IMR-90 (cell line): ENCODE measurements at regions of chr11 and their contacts with region 1.

Region 1: GRCh38 chr11:95923728-95924413 is at the start of gene MTMR2:
- DNase-seq: peak; percentile 70
- ATAC-seq: peak; percentile 98
- H3K4me3 ChIP-seq: peak within 1 kb of the TSS; percentile 86
- H3K27ac ChIP-seq: peak within 1 kb of the TSS; percentile 99
- H3K4me1 ChIP-seq: 0 out of 2 replicates have a peak, but pooled peaks cover 1% of the 10 kb centered on the region
- H3K27me3 ChIP-seq: no peaks in the 10 kb centered on the region
- CTCF ChIP-seq: no peak
- POLR2A ChIP-seq: peak; percentile 96
- RAD21 ChIP-seq: no peak
- total RNA-seq, gene MTMR2: 30.6 and 36.9 TPM in 2 replicates

Region 2: GRCh38 chr11:95790123-95790932 is 133.5 kb before region 1 on chr11 and contains the start of gene CEP57:
- CTCF ChIA-PET with region 1: no interaction called
- POLR2A ChIA-PET with region 1: no interaction called
- dilution Hi-C with region 1: no loop called
- in situ Hi-C with region 1: no loop called
- intact Hi-C with region 1: loop called (anchors 2 kb)
- DNase-seq: peak; percentile 99
- ATAC-seq: peak; percentile 76
- H3K4me3 ChIP-seq: peak within 1 kb of the TSS; percentile 78
- H3K27ac ChIP-seq: peak within 1 kb of the TSS; percentile 85
- H3K4me1 ChIP-seq: no peaks in the 10 kb centered on the region
- H3K27me3 ChIP-seq: no peaks in the 10 kb centered on the region
- CTCF ChIP-seq: no peak
- POLR2A ChIP-seq: peak; percentile 58
- RAD21 ChIP-seq: no peak
- total RNA-seq, gene CEP57: 30.5 and 38.0 TPM in 2 replicates

Region 3: GRCh38 chr11:95835768-95836488 is 87.9 kb before region 1 on chr11:
- CTCF ChIA-PET with region 1: no interaction called
- POLR2A ChIA-PET with region 1: no interaction called
- dilution Hi-C with region 1: no loop called
- in situ Hi-C with region 1: no loop called
- intact Hi-C with region 1: loop called (anchors 2 kb)
- DNase-seq: peak; percentile 96
- ATAC-seq: peak; percentile 84
- H3K4me3 ChIP-seq: no peak overlapping the region
- H3K27ac ChIP-seq: no peak overlapping the region
- H3K4me1 ChIP-seq: peaks cover 12% of the 10 kb centered on the region
- H3K27me3 ChIP-seq: no peaks in the 10 kb centered on the region
- CTCF ChIP-seq: peak; percentile 97
- POLR2A ChIP-seq: no peak
- RAD21 ChIP-seq: peak; percentile 95

Region 4: GRCh38 chr11:95877291-95877690 is 46.6 kb before region 1 on chr11:
- CTCF ChIA-PET with region 1: no interaction called
- POLR2A ChIA-PET with region 1: no interaction called
- dilution Hi-C with region 1: no loop called
- in situ Hi-C with region 1: no loop called
- intact Hi-C with region 1: loop called (anchors 5 kb)
- DNase-seq: peak; percentile 100
- ATAC-seq: peak; percentile 99
- H3K4me3 ChIP-seq: no peak overlapping the region
- H3K27ac ChIP-seq: peak overlapping the region; percentile 92
- H3K4me1 ChIP-seq: peaks cover 7% of the 10 kb centered on the region; the same call in 1 of the 2 replicates
- H3K27me3 ChIP-seq: no peaks in the 10 kb centered on the region
- CTCF ChIP-seq: no peak
- POLR2A ChIP-seq: no peak
- RAD21 ChIP-seq: 0 out of 2 replicates have a peak, but pooled peaks have one; percentile 1

Region 5: GRCh38 chr11:96054870-96055705 is 131.2 kb after region 1 on chr11:
- CTCF ChIA-PET with region 1: no interaction called
- POLR2A ChIA-PET with region 1: no interaction called
- dilution Hi-C with region 1: no loop called
- in situ Hi-C with region 1: no loop called
- intact Hi-C with region 1: loop called (anchors 5 kb)
- DNase-seq: peak; percentile 64
- ATAC-seq: no peak
- H3K4me3 ChIP-seq: no peak overlapping the region
- H3K27ac ChIP-seq: 0 out of 2 replicates have a peak overlapping the region, but pooled peaks have one; percentile 37
- H3K4me1 ChIP-seq: peaks cover 33% of the 10 kb centered on the region
- H3K27me3 ChIP-seq: no peaks in the 10 kb centered on the region
- CTCF ChIP-seq: peak; percentile 63
- POLR2A ChIP-seq: no peak
- RAD21 ChIP-seq: peak; percentile 64

Region 6: DNA sequence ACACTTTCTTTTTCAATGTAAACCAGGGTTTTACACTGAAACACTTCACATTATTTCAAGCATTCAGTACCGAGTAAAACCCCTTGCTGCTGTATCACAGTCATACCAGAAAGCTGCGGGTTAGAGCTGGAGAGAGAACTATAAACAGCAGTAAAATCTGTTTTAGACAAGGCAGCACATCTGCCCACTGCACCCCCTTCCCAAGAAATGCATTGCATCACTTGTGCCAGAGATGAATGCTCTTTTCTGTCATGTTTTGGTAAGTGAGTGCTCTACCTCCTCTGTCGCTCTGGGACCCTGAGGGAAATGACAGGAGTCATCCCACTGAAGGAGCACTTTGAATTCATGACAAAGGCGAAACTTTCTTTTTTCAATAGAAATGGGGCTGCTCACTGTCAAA is 311.9 kb after region 1 on chr11:
- CTCF ChIA-PET with region 1: no interaction called
- POLR2A ChIA-PET with region 1: no interaction called
- dilution Hi-C with region 1: no loop called
- in situ Hi-C with region 1: no loop called
- intact Hi-C with region 1: loop called (anchors 10 kb)
- DNase-seq: peak; percentile 73
- ATAC-seq: peak; percentile 74
- H3K4me3 ChIP-seq: no peak overlapping the region
- H3K27ac ChIP-seq: peak overlapping the region; percentile 84; the same call in 1 of the 2 replicates
- H3K4me1 ChIP-seq: peaks cover 19% of the 10 kb centered on the region
- H3K27me3 ChIP-seq: no peaks in the 10 kb centered on the region
- CTCF ChIP-seq: no peak
- POLR2A ChIP-seq: no peak
- RAD21 ChIP-seq: no peak

Region 7: GRCh38 chr11:96389720-96390487 is 466.0 kb after region 1 on chr11 and contains the starts of genes CCDC82 and JRKL:
- CTCF ChIA-PET with region 1: no interaction called
- POLR2A ChIA-PET with region 1: no interaction called
- dilution Hi-C with region 1: no loop called
- in situ Hi-C with region 1: no loop called
- intact Hi-C with region 1: loop called (anchors 5 kb)
- DNase-seq: peak; percentile 92
- ATAC-seq: peak; percentile 99
- H3K4me3 ChIP-seq: peak within 1 kb of the TSS; percentile 92
- H3K27ac ChIP-seq: peak within 1 kb of the TSS; percentile 91
- H3K4me1 ChIP-seq: no peaks in the 10 kb centered on the region; the same call in 1 of the 2 replicates
- H3K27me3 ChIP-seq: no peaks in the 10 kb centered on the region
- CTCF ChIP-seq: no peak
- POLR2A ChIP-seq: peak; percentile 83
- RAD21 ChIP-seq: no peak
- total RNA-seq, gene CCDC82: 4.1 and 11.7 TPM in 2 replicates
- total RNA-seq, gene JRKL: 5.9 and 10.3 TPM in 2 replicates